Right ventricle myocardium superior (tissue), 1 donor: ENCODE measurements at regions of chr10 and their contacts with region 1.

Region 1: GRCh38 chr10:69644658-69645295 is 14.7 kb downstream of the FAM241B start:
- DNase-seq: peak; percentile 66
- ATAC-seq: peak; percentile 72

Region 2: GRCh38 chr10:69716711-69717560 is 72.2 kb after region 1 on chr10:
- intact Hi-C with region 1: loop called (anchors 5 kb)
- DNase-seq: peak; percentile 70
- ATAC-seq: peak; percentile 66